ENCODE measurements at regions of chr17 and their contacts with region 1.

Region 1: DNA sequence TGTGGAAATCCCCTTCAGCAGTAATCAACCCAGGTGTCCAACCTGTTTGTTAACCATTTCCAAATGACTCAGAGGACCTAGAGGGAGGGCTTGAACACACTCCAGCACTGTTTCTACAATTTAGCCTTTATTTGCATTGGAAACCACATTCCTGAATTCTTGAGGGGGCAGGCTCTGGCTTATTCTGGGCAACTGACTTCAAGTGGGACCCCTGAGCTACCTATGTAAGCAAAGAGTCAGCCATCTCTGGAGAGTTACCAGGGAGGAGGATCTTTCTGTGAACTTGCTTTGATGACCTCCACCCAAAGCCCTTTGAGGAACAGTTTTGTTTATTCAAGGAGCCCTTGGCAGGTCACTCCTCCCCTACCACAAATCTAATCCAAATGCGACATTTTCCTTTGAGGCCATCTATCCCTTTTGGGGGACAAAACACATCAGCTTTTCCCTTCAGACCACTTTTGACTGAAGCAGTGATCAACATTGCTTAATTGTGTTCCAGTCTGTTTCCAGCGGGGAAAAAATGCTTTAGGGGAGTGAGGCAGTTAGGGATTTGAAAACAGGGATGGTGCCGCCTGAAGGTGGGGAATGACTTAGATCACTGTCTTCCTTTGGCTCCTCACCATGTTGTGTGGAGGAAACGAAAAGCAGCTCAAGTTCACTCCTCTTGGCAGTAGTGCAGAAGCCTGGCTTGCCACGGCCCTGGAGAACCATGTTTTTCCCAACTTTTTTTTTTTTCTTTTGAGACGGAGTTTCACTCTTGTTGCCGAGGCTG is 46.2 kb downstream of the TUBD1 start:
- DNase-seq: no peak
- H3K4me3 ChIP-seq: no peak overlapping the region
- H3K27me3 ChIP-seq: no peaks in the 10 kb centered on the region
- CTCF ChIP-seq: no peak

Region 2: GRCh38 chr17:59746849-59747445 is 99.6 kb before region 1 on chr17:
- CTCF ChIA-PET with region 1: interaction called, 18 read pairs
- POLR2A ChIA-PET with region 1: interaction called, 35 read pairs
- DNase-seq: no peak
- H3K4me3 ChIP-seq: no peak overlapping the region
- H3K27me3 ChIP-seq: no peaks in the 10 kb centered on the region
- CTCF ChIP-seq: peak; percentile 62

Region 3: DNA sequence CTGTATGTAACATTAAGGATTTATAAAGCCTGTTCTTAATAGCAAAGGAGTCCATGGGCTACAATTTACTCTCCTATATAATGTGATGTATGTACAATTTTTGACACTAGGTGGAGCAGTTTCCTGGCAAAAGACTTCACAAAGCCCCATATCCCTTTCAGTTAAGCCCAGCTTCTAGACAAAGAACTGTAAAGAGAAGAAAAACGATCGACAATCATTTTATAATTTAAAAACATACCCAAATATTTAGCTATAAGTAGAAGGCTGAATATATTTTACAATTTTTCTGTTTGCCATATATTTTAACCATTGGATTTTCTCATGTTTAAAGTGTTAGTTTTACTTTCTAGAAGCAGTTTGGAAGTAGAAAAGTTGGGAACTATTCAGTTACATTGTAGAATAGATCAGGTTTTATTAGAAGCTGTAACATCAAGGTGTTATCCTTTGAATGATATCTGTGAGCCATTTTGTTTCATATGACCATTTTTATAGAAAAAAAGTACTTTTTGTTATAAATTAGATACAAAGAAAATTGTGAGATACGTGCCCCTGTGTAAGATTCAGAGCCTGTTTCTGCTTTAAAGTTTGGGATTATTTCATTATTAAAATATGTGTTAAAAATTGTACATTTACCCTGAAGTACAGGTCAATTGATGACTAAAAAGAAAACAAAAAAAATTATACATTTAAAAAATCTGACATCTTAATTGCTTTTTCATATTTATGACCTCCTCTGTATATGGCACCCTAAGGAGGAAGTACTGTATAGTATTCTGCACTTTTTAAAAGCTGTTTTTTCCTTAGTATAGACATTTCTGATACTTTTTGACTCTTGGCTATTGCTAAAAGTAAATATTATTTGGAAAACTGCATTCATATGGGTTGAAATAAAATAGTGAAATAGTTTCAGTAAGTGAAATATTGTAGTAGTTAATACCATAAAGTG is 92.8 kb before region 1 on chr17:
- CTCF ChIA-PET with region 1: interaction called, 18 read pairs
- POLR2A ChIA-PET with region 1: interaction called, 35 read pairs
- DNase-seq: peak; percentile 66
- H3K4me3 ChIP-seq: 0 out of 2 replicates have a peak overlapping the region, but pooled peaks have one; percentile 13
- H3K27me3 ChIP-seq: no peaks in the 10 kb centered on the region
- CTCF ChIP-seq: peak; percentile 54

Region 4: DNA sequence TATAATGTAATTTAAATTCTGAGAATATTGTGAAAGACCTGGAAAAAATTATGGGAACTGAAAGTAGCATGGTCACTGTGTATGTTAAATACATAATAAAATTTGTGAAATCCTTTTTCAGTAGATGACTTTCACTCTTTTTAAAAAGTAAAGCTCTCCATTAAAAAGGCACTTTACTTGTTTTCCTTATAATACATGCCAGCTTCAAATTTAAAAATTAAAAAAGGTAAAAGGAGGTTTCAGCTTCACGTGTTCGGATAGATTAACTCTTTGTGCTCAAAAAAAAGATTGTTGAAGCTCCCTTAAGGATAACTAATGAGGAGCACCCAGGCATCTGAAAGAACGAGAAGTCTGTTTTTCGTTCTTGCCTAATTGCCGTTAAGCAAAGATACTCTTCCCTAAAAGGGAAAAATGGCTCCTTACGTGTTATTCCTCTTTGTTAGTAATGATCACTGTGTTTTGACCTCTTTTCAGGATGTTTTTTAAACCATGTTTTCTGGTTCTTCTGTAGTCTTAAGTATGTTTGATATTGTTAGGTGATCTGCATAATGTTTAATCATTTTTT is 41.6 kb before region 1 on chr17:
- CTCF ChIA-PET with region 1: no interaction called
- POLR2A ChIA-PET with region 1: interaction called, 12 read pairs
- DNase-seq: no peak
- H3K4me3 ChIP-seq: no peak overlapping the region
- H3K27me3 ChIP-seq: no peaks in the 10 kb centered on the region
- CTCF ChIP-seq: no peak

Region 5: DNA sequence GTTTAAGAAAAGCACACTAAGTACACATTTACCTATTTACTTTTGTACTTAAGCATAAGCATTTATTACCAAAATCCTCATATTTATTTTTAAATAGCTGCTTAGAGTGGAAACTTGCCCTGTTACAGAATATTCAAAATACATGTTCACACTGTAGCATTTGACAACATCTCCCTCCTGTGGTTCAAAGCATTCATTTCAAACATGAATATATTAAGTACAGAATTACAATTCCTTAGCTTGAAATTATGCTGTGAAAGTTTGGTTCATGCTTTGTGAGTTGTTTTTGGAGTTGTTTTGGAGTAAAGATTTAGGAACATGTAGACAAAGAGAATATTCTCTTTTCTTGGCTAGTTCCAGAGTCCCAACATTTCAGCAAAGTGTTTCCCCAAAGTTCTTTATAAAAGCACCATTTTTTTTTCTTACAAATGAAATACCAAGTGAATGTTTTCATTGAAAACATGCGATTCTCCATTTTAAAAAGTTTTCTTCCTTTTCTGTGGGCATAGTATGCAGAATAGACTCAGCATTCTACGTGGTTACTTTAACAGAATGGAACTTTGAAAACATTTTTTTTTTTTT is 13.0 kb after region 1 on chr17:
- CTCF ChIA-PET with region 1: interaction called, 24 read pairs
- POLR2A ChIA-PET with region 1: interaction called, 3 read pairs
- DNase-seq: no peak
- H3K4me3 ChIP-seq: no peak overlapping the region
- H3K27me3 ChIP-seq: no peaks in the 10 kb centered on the region
- CTCF ChIP-seq: peak; percentile 55

Region 6: GRCh38 chr17:59876107-59876506 is 29.5 kb after region 1 on chr17:
- CTCF ChIA-PET with region 1: no interaction called
- POLR2A ChIA-PET with region 1: no interaction called
- DNase-seq: no peak
- H3K4me3 ChIP-seq: no peak overlapping the region
- H3K27me3 ChIP-seq: no peaks in the 10 kb centered on the region
- CTCF ChIP-seq: no peak

Region 7: DNA sequence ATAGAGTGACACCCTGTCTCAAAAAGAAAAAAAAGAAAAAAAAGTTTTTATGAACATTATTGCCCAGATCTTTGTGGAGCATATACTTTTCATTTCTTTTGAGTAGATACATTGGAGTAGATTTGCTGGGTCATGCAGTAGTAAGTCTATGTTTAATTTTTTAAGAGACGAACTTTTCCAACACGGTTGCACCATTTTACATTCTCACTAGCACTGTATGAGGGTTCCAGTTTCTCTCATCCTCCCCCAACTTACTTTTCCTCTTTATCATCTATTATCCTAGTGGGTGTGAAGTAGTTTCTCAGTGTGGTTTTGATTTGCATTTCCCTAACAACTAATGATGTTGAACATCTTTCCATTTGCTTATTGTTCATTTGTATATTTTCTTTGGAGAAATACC is 56.9 kb after region 1 on chr17:
- CTCF ChIA-PET with region 1: no interaction called
- POLR2A ChIA-PET with region 1: no interaction called
- DNase-seq: no peak
- H3K4me3 ChIP-seq: no peak overlapping the region
- H3K27me3 ChIP-seq: no peaks in the 10 kb centered on the region
- CTCF ChIP-seq: no peak

Measured in BJ (cell line).